Psoas muscle (tissue), 8 donors: ENCODE measurements at regions of chr9 and their contacts with region 1.

Region 1: DNA sequence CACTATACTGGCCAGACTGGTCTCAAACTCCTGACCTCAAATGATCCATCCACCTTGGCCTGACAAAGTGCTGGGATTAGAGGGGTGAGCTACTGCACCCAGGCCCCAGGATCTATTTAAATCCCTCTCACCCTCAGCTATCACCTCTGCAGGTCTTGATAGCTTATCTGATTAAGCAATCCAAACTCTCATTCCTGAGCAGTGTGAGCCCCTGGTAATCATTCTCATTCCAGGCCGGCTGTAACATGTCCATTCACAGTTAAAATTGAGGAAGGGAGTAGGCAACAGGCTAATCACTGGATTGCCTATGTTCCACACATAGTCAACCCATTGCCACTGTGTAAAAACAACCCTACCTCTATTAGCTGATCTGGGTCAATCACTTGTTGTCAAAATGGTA is 111.1 kb downstream of the AGTPBP1 start:
- DNase-seq: no peak
- ATAC-seq: no peak
- H3K4me3 ChIP-seq: no peak overlapping the region
- H3K27ac ChIP-seq: no peak overlapping the region
- H3K4me1 ChIP-seq: no peaks in the 10 kb centered on the region
- H3K27me3 ChIP-seq: no peaks in the 10 kb centered on the region
- CTCF ChIP-seq: no peak

Region 2: GRCh38 chr9:84669288-84670137 is 961.2 kb before region 1 on chr9 and contains the start of gene NTRK2:
- intact Hi-C with region 1: loop called in 1 of 2 experiments (anchors 10 kb)
- DNase-seq: peak; percentile 34 to 56
- ATAC-seq: peak; percentile 15 to 33 (median 26)
- H3K4me3 ChIP-seq: peak within 1 kb of the TSS; percentile 61
- H3K27ac ChIP-seq: peak within 1 kb of the TSS; percentile 14
- H3K4me1 ChIP-seq: peaks cover 5% of the 10 kb centered on the region
- H3K27me3 ChIP-seq: peaks cover 2 to 60% (median 3%) of the 10 kb centered on the region in 3 donors
- CTCF ChIP-seq: no peak
- total RNA-seq, gene NTRK2: 1.1 to 3.6 (median 1.4) TPM

Region 3: DNA sequence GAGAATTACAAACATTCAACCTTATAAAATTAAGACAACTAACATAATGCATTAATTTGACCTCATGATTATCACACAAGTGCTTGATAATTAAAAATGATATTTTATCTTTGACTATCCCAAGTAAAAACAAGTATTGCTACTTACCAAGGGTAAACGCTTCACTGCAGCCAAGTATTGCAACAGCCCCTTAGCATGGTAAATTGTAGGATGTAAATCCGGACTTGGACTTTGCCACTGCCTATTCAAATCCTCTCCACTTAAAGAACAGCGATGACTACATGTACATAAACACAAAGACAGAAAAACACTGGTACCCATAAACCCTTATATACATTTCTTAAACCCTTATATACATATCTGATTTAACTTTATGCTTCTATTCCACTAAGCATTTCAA is 44.0 kb before region 1 on chr9:
- intact Hi-C with region 1: no loop called
- DNase-seq: no peak
- ATAC-seq: no peak
- H3K4me3 ChIP-seq: no peak overlapping the region
- H3K27ac ChIP-seq: no peak overlapping the region
- H3K4me1 ChIP-seq: no peaks in the 10 kb centered on the region
- H3K27me3 ChIP-seq: no peaks in the 10 kb centered on the region
- CTCF ChIP-seq: no peak